CD14-positive monocyte (primary cell): ENCODE measurements at regions of chr9 and their contacts with region 1.

Region 1: GRCh38 chr9:5459289-5459829 is 9.0 kb downstream of the CD274 start:
- DNase-seq: peak; percentile 61 to 94 (median 83)
- H3K4me3 ChIP-seq: peak overlapping the region in 1 of 3 experiments; percentile 46
- H3K4me3 Mint-ChIP-seq: no peak overlapping the region
- H3K27ac ChIP-seq: peak overlapping the region; percentile 17 to 77
- H3K27ac Mint-ChIP-seq: peak overlapping the region; percentile 68 to 94 (median 83)
- H3K4me1 ChIP-seq: peaks cover 22 to 24% of the 10 kb centered on the region in 2 donors
- H3K4me1 Mint-ChIP-seq: peaks cover 28% of the 10 kb centered on the region
- H3K27me3 ChIP-seq: no peaks in the 10 kb centered on the region
- H3K27me3 Mint-ChIP-seq: peaks cover 0 to 5% (median 2%) of the 10 kb centered on the region in 3 donors
- CTCF ChIP-seq: no peak

Region 2: DNA sequence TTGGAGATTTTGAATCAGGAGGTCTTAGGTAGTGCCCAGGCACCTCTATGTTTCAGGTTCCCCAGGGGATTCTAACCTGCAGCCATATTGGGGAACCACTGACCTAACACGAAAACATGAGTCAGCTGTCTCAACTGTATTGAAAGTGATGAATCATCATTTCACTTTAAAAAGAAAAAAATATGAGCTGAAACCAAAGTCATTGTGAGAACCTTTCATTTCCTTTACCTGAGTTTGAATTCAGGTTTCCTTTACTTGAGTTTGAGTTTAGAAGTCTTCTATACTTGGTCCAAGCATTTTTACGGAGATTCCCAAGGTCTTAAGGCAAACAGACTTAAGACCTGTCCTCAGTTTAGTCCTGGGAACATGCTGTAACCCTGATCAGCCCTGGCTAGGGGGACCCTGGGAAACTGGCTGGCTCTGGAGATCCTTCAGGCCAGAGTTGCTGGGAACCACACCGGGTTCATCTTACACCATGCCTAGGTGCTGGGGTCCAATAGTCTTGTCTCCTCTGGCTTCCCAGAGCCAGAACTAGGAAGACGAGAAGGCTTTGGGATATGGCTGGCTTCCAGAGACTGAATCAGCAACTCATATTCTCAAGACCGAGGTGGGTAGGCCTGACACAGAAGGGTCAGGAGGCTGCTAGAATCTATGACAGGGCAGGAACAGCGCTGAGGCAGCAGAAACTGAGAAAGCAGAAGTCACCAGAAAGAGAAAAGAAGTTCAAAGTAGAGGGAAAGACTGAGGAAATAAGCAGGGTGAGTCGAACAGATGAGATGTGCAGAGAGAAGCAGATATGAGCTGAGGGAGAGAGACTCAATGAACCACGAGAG is 34.5 kb after region 1 on chr9:
- intact Hi-C with region 1: loop called in 1 of 2 experiments (anchors 5 kb)
- DNase-seq: peak; percentile 74 to 86 (median 75)
- H3K4me3 ChIP-seq: peak overlapping the region in 2 of 3 experiments; percentile 10 to 62
- H3K4me3 Mint-ChIP-seq: peak overlapping the region; percentile 20 to 69
- H3K27ac ChIP-seq: peak overlapping the region; percentile 88
- H3K27ac Mint-ChIP-seq: peak overlapping the region; percentile 81 to 93 (median 90)
- H3K4me1 ChIP-seq: peaks cover 29 to 31% of the 10 kb centered on the region in 2 donors
- H3K4me1 Mint-ChIP-seq: peaks cover 31% of the 10 kb centered on the region
- H3K27me3 ChIP-seq: no peaks in the 10 kb centered on the region
- H3K27me3 Mint-ChIP-seq: no peaks in the 10 kb centered on the region
- CTCF ChIP-seq: no peak